ENCODE measurements at regions of chr11 and their contacts with region 1.

Region 1: GRCh38 chr11:117919781-117920221 is 9.4 kb downstream of the TMPRSS13 start:
- DNase-seq: no peak
- ATAC-seq: peak; percentile 83
- H3K4me3 ChIP-seq: no peak overlapping the region
- H3K27ac ChIP-seq: no peak overlapping the region
- H3K4me1 ChIP-seq: peaks cover 8% of the 10 kb centered on the region
- H3K27me3 ChIP-seq: no peaks in the 10 kb centered on the region
- CTCF ChIP-seq: no peak
- EP300 ChIP-seq: no peak
- POLR2A ChIP-seq: no peak
- RAD21 ChIP-seq: no peak

Region 2: DNA sequence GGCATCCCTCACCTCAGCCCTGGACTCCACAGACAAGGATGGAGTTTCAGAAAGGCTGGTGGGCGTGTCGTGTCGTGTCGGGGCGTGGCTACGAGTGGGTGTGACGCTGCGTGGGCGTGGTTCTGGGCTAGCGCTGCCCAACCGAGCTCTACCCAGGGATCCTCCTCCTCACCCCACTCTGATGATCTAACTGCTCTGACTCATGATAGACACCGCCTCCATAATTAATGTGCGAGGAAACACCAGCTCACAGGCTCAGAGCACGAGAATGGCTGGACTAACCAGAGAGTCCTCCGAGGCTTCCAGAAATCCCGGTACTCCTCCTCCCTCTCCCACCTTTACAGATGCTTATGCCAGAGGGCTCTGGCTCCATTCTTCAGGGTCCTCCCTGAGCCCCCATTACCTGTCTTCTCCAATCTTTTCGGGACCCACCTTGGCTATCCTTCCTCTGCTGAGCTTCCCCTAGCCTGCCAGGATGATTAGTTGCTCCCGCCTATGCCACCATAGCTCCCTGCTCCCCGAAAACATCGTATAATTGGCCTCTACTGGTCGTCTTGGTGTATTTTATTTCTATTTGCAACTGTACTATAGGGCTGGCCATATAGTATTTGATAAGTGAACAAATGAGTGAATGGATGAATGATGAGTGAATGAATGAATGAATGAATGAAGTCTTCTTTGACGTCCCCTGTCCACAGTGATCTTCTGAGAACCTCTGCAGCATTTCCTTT is 12.4 kb before region 1 on chr11:
- CTCF ChIA-PET with region 1: interaction called, 4 read pairs
- POLR2A ChIA-PET with region 1: interaction called, 4 read pairs
- RAD21 ChIA-PET with region 1: interaction called, 7 read pairs
- SMC1A ChIA-PET with region 1: interaction called, 10 read pairs
- in situ Hi-C with region 1: no loop called
- intact Hi-C with region 1: no loop called
- DNase-seq: peak; percentile 54
- ATAC-seq: peak; percentile 93
- H3K4me3 ChIP-seq: no peak overlapping the region
- H3K27ac ChIP-seq: no peak overlapping the region
- H3K4me1 ChIP-seq: peaks cover 5% of the 10 kb centered on the region; the same call in 1 of the 2 replicates
- H3K27me3 ChIP-seq: no peaks in the 10 kb centered on the region; a peak in 1 of 4 replicates
- CTCF ChIP-seq: no peak
- EP300 ChIP-seq: no peak
- POLR2A ChIP-seq: no peak
- RAD21 ChIP-seq: no peak

Region 3: GRCh38 chr11:117932067-117932370 is 12.2 kb after region 1 on chr11:
- CTCF ChIA-PET with region 1: interaction called, 5 read pairs
- POLR2A ChIA-PET with region 1: interaction called, 5 read pairs
- RAD21 ChIA-PET with region 1: interaction called, 3 read pairs
- SMC1A ChIA-PET with region 1: interaction called, 23 read pairs
- in situ Hi-C with region 1: no loop called
- intact Hi-C with region 1: no loop called
- DNase-seq: peak; percentile 78
- ATAC-seq: peak; percentile 80
- H3K4me3 ChIP-seq: no peak overlapping the region
- H3K27ac ChIP-seq: no peak overlapping the region; the same call in 1 of the 2 replicates
- H3K4me1 ChIP-seq: peaks cover 40% of the 10 kb centered on the region
- H3K27me3 ChIP-seq: no peaks in the 10 kb centered on the region
- CTCF ChIP-seq: no peak
- EP300 ChIP-seq: peak in 1 of 2 experiments; percentile 57; a peak in 1 of 4 replicates
- POLR2A ChIP-seq: no peak
- RAD21 ChIP-seq: no peak

Region 4: GRCh38 chr11:117941163-117941707 is 21.4 kb after region 1 on chr11:
- CTCF ChIA-PET with region 1: interaction called, 43 read pairs
- POLR2A ChIA-PET with region 1: interaction called, 5 read pairs
- RAD21 ChIA-PET with region 1: interaction called, 10 read pairs
- SMC1A ChIA-PET with region 1: interaction called, 23 read pairs
- in situ Hi-C with region 1: no loop called
- intact Hi-C with region 1: no loop called
- DNase-seq: no peak
- ATAC-seq: no peak
- H3K4me3 ChIP-seq: no peak overlapping the region
- H3K27ac ChIP-seq: no peak overlapping the region
- H3K4me1 ChIP-seq: peaks cover 24% of the 10 kb centered on the region
- H3K27me3 ChIP-seq: no peaks in the 10 kb centered on the region
- CTCF ChIP-seq: no peak
- EP300 ChIP-seq: no peak
- POLR2A ChIP-seq: no peak
- RAD21 ChIP-seq: no peak